ENCODE measurements at regions of chr2 and their contacts with region 1.

Region 1: DNA sequence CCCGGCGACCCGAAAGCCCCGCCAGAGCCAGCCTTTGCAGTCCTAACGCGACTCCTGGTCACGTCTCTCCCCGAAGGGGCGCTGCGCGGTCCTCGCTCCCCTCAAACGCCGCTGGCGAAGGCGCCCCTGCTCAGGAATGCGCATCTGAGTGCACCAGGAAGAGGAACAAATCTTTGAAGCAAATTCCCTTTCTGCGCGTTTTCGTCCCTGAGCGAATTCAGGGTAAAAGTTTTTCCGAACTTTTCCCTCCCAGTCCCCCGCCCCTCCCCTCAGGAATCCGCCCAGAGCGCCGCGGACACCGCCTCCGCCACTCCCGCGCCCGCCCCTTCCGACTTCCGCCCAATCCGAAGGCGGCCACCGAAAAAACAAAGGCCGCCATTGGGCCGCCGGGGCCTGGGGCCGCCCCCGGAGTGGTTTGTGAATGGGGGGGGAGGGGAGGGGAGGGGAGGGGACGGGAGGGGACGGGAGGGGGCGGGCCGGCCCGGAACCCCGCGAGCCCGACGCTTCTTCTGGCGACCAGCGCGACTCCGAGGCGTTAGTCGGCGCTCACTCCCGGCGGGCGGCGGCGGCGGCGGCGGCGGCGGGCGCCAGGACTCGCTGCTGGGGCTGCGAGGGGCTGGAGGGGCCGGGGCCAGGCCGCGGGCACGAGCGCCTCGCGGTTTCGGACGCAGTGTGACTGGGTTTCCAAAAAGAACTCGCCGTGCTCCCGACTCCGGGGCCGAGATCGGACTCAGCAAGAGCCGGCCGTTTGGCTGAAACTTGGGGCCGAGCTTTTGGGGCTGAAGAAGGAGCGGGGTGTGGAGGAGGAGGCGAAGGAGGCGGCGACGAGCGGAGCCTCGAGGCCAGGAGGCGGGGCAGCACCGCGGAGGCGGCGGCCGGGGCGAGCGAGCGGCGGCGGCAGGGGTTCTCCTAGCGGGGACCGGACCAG is at the start of gene FZD7:
- DNase-seq: peak; percentile 95 to 97
- ATAC-seq: peak; percentile 84 to 88 (median 86)
- H3K4me3 ChIP-seq: peak within 1 kb of the TSS; percentile 87
- H3K27ac ChIP-seq: peak within 1 kb of the TSS; percentile 96
- H3K4me1 ChIP-seq: peaks cover 24% of the 10 kb centered on the region
- H3K27me3 ChIP-seq: no peaks in the 10 kb centered on the region
- CTCF ChIP-seq: no peak
- total RNA-seq, gene FZD7: 4.1 to 32.1 (median 9.9) TPM

Region 2: GRCh38 chr2:201860636-201861066 is 172.9 kb before region 1 on chr2:
- intact Hi-C with region 1: loop called (anchors 5 kb)
- DNase-seq: no peak
- ATAC-seq: peak; percentile 83 to 94 (median 87)
- H3K4me3 ChIP-seq: no peak overlapping the region
- H3K27ac ChIP-seq: no peak overlapping the region
- H3K4me1 ChIP-seq: peaks cover 9% of the 10 kb centered on the region
- H3K27me3 ChIP-seq: no peaks in the 10 kb centered on the region
- CTCF ChIP-seq: peak; percentile 93

Region 3: DNA sequence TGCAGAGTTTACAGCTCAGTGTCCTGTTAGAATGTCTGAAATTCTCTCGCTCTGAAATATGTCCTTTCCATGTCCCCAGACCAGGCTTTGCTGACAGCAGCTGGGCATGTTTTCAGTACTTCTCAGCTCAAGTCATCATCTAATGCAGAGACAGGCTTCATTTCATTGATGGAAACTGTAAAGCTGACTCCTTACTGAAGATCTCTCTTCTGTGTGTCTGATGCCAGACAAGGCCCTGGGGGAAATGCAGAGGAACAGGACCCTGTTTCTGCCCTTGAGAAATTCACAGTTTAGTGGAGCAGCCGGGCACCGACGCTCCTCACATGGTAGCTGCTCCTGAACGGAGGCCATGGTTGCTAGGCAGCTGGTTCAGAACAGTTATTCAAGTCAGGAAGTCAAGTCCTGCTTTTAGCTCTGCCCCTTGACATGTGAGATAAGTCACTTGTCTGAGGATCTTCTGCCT is 24.5 kb before region 1 on chr2:
- intact Hi-C with region 1: loop called in 1 of 2 experiments (anchors 2 kb)
- DNase-seq: peak in 1 of 2 donors; percentile 67
- ATAC-seq: peak; percentile 85 to 98 (median 98)
- H3K4me3 ChIP-seq: peak overlapping the region; percentile 13
- H3K27ac ChIP-seq: peak overlapping the region; percentile 85
- H3K4me1 ChIP-seq: peaks cover 13% of the 10 kb centered on the region
- H3K27me3 ChIP-seq: no peaks in the 10 kb centered on the region
- CTCF ChIP-seq: no peak

Region 4: DNA sequence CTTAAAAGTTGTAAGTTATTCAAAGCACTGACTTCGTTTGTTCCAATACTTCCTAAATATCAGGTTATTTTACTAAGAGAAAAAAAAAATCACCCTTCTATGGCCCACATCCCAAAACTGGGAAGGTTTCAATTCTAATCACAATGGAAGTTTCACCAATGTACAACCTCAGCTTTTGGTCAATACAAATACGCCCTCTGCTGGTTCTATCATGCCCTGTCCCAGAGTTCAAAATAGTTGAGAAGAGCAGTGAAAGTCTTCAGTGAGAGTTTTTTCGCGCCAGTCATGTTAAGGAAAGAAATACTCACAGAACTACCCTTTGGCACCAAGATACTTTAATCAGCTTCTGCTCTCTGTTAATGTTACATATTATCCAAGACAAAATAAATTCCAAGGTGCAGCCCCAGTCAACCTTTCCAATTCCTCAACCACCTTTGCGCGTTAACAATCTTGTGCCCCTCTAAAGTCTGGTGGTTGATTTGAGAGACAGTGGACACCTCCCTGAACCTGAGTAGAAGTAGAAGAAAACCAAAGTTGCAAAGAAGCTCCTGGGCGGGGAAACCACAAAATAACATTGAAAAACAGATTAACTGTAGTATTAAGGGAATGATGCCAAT is 144.9 kb after region 1 on chr2:
- intact Hi-C with region 1: loop called (anchors 1 to 5 kb)
- DNase-seq: no peak
- ATAC-seq: peak; percentile 72 to 96 (median 87)
- H3K4me3 ChIP-seq: no peak overlapping the region
- H3K27ac ChIP-seq: no peak overlapping the region
- H3K4me1 ChIP-seq: no peaks in the 10 kb centered on the region
- H3K27me3 ChIP-seq: no peaks in the 10 kb centered on the region
- CTCF ChIP-seq: peak; percentile 90

Measured in psoas muscle (tissue), 8 donors.